ENCODE measurements at regions of chr1 and their contacts with region 1.

Region 1: DNA sequence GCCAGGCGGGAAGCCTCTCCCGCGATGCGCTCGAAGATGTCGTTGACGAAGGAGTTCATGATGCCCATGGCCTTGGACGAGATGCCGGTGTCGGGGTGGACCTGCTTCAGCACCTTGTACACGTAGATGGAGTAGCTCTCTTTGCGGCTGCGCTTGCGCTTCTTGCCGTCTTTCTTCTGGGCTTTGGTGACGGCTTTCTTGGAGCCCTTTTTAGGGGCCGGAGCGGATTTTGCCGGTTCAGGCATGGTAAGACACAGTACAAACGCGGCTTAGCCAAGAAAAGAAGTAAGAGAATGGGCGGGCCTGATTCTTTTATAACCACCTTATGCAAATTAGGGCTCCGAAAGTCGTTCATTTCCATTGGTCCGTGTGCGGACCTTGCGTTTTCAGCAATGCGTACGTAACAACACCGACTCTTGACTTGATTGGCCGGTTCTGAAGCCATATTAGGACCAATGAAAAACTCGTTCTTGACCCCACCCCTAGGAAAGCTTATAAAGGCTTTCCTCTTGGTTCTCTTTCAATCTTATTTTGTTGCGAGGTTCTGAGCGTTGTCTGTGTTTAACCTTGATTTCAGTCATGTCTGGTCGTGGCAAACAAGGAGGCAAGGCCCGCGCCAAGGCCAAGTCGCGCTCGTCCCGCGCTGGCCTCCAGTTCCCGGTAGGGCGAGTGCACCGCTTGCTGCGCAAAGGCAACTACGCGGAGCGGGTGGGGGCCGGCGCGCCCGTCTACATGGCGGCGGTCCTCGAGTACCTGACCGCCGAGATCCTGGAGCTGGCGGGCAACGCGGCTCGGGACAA is 12.8 kb upstream of the BOLA1 start:
- DNase-seq: peak; percentile 99
- ATAC-seq: peak; percentile 63
- H3K4me3 ChIP-seq: peak overlapping the region; percentile 50 to 63
- H3K27ac ChIP-seq: peak overlapping the region; percentile 100
- H3K4me1 ChIP-seq: peaks cover 22 to 45% of the 10 kb centered on the region in 2 experiments
- H3K27me3 ChIP-seq: no peaks in the 10 kb centered on the region
- CTCF ChIP-seq: no peak
- POLR2A ChIP-seq: peak; percentile 96
- RAD21 ChIP-seq: 0 out of 2 replicates have a peak, but pooled peaks have one; percentile 13

Region 2: GRCh38 chr1:149844101-149844500 is 42.5 kb before region 1 on chr1:
- CTCF ChIA-PET with region 1: no interaction called
- POLR2A ChIA-PET with region 1: interaction called, 37 read pairs
- RAD21 ChIA-PET with region 1: no interaction called
- intact Hi-C with region 1: no loop called
- DNase-seq: no peak
- ATAC-seq: no peak
- H3K4me3 ChIP-seq: peak overlapping the region; percentile 86 to 90
- H3K27ac ChIP-seq: peak overlapping the region; percentile 80; the same call in 1 of the 2 replicates
- H3K4me1 ChIP-seq: peaks cover 32 to 47% of the 10 kb centered on the region in 2 experiments
- H3K27me3 ChIP-seq: no peaks in the 10 kb centered on the region
- CTCF ChIP-seq: no peak
- POLR2A ChIP-seq: no peak
- RAD21 ChIP-seq: no peak

Region 3: DNA sequence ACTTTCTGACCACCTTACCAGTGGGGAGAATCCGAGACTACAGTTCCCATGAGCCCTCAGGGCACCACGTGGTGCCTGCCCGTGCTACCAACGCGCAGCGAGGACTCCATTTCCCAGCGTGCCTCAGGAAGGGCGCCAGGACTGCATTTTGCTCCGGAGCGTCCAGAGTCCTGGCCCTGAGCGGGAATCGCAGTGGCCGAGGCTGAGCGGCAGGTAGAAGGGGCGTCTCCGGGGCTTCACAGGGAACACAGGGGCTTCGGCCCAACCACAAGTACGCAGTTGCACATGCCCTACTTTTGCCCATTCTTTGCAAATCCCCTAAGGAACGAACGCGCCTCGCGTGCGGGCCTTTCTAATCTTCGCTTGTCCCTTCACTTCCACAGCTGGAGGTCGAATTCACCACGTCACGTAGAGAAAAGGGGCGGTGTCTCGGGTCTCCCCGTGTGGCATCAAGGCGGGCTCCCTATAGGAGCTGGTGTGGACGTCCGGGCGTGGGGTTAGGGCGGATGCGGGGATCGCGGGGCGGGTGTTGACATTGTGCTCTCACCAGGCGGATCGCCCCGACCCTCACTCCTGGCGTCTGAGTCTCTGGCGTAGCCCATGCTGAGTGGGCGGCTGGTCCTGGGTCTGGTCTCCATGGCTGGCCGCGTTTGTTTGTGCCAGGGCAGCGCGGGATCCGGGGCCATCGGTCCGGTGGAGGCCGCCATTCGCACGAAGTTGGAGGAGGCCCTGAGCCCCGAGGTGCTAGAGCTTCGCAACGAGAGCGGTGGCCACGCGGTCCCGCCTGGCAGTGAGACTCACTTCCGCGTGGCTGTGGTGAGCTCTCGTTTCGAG is 13.1 kb after region 1 on chr1 and contains the start of gene BOLA1:
- CTCF ChIA-PET with region 1: interaction called, 3 read pairs
- POLR2A ChIA-PET with region 1: interaction called, 16 read pairs
- RAD21 ChIA-PET with region 1: no interaction called
- intact Hi-C with region 1: no loop called
- DNase-seq: peak; percentile 86
- ATAC-seq: peak; percentile 97
- H3K4me3 ChIP-seq: peak within 1 kb of the TSS; percentile 59 to 73
- H3K27ac ChIP-seq: peak within 1 kb of the TSS; percentile 70
- H3K4me1 ChIP-seq: peaks cover 0 to 14% of the 10 kb centered on the region in 2 experiments; a peak in 2 of 4 replicates
- H3K27me3 ChIP-seq: no peaks in the 10 kb centered on the region
- CTCF ChIP-seq: no peak
- POLR2A ChIP-seq: peak; percentile 68
- RAD21 ChIP-seq: no peak
- total RNA-seq, gene BOLA1: 20.4 TPM

Region 4: DNA sequence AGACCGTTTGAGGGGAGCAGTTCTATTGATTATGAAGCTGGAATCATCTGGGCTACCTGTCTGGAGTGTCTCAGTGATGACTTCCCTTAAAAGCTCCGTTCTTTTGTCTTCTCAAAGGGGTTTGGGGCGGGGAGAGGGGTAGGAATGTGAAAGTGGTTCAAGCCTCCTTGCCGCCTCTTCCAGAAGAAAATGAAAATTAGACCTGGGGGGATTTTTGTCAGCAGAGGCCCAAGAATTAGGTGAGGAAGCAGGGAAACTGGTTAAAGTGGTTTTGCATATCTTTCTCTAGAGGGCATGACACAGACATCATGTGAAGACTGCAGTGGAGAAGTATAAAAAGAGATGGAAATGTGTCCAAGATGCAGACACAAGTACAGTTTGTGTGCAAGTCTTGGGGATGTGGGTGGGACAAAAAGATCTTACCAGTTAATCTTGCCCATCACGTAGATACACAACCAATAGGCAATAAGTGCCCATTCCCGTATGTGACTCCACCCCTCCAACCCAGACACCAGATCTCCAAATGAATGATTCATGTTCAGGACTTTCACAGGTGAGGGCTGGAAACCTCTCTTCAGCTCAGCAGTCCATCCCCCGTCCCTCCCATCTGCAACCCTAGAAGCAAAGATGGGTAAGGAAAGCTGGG is 50.6 kb after region 1 on chr1:
- CTCF ChIA-PET with region 1: interaction called, 4 read pairs
- POLR2A ChIA-PET with region 1: interaction called, 43 read pairs
- RAD21 ChIA-PET with region 1: interaction called in 1 of 2 experiments, 4 read pairs
- intact Hi-C with region 1: no loop called
- DNase-seq: peak; percentile 91
- ATAC-seq: peak; percentile 74
- H3K4me3 ChIP-seq: peak overlapping the region; percentile 64 to 66
- H3K27ac ChIP-seq: peak overlapping the region; percentile 89
- H3K4me1 ChIP-seq: peaks cover 39 to 63% of the 10 kb centered on the region in 2 experiments
- H3K27me3 ChIP-seq: no peaks in the 10 kb centered on the region
- CTCF ChIP-seq: no peak
- POLR2A ChIP-seq: peak; percentile 83
- RAD21 ChIP-seq: peak; percentile 18; the same call in 1 of the 2 replicates

Region 5: DNA sequence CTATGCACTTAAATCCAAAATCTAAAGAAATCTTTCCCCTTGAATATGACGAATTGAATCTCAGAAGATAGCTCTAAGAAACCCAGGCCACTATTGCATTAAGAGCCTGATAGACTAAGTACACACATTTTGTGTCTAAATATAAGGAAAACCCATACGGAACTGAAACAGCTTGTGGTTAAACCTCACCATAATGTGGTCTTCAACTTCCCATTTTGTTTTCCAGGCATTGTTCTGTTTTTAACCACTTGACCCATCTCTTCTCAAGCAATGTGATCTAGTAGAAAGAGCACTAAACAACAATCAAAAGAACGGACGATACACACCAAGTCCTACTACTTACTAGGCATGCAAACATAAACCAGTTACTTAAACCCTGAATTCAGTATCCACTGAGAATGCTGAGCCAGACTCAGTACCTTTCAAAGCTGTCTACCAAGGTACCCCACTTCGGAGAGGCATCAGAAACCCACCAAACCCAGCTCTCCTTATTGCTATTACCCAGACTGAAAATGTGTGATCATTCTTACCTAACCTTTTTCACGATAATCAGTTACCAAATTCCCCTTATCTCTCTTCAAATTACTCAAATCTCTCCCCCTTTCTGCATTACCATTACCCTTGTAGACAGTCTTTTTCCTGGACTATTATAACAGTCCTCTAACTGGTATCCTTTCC is 111.1 kb after region 1 on chr1:
- CTCF ChIA-PET with region 1: no interaction called
- POLR2A ChIA-PET with region 1: no interaction called
- RAD21 ChIA-PET with region 1: no interaction called
- intact Hi-C with region 1: no loop called
- DNase-seq: no peak
- ATAC-seq: no peak
- H3K4me3 ChIP-seq: no peak overlapping the region
- H3K27ac ChIP-seq: no peak overlapping the region
- H3K4me1 ChIP-seq: no peaks in the 10 kb centered on the region
- H3K27me3 ChIP-seq: no peaks in the 10 kb centered on the region
- CTCF ChIP-seq: no peak
- POLR2A ChIP-seq: no peak
- RAD21 ChIP-seq: no peak

Region 6: DNA sequence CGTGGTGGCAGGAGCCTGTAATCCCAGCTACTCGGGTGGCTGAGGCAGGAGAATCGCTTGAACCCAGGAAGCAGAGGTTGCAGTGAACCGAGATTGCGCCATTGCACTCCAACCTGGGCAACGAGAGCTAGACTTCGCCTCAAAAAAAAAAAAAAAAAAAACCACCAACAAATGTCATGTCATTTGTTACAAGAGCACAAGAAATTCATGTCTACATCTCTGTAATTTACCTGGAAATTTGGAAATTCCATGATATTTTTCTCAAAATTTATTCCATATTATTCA is 164.4 kb after region 1 on chr1:
- CTCF ChIA-PET with region 1: interaction called, 8 read pairs
- POLR2A ChIA-PET with region 1: interaction called, 14 read pairs
- RAD21 ChIA-PET with region 1: interaction called in 1 of 2 experiments, 3 read pairs
- intact Hi-C with region 1: loop called (anchors 1 kb)
- DNase-seq: no peak
- ATAC-seq: no peak
- H3K4me3 ChIP-seq: no peak overlapping the region
- H3K27ac ChIP-seq: no peak overlapping the region
- H3K4me1 ChIP-seq: peaks cover 0 to 16% of the 10 kb centered on the region in 2 experiments; a peak in 2 of 4 replicates
- H3K27me3 ChIP-seq: no peaks in the 10 kb centered on the region
- CTCF ChIP-seq: no peak
- POLR2A ChIP-seq: no peak
- RAD21 ChIP-seq: no peak

Region 7: DNA sequence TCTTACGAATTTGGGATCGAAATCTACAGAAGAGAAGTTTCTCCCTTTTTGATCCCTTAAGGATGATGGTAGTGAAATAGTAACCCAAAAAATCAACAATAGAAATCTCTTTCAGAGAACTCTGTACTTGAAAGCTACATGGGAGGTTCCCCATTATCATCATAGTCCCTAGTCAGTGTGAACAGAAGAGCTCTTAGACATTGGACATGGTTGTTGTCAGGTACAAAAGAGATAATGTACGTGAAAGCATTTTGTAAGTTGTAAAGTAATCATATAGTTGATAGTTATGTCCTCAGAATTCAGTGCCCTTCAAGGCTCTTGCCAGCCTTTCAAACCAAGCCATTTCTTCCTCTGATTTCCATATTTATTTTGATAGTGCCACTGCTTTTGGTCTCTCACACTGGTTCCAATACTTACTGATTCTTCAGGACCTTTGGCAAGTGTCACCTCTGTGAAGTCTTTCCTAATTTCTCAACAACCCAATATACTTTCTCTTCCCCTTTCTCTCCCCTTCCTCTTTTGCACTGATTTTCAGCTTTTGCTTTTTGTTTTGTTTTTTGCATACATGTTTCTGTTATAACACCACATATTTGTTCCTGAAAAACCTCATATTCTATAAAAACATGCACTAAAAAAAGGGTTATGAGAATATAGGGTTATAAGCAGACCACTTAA is 203.4 kb after region 1 on chr1:
- CTCF ChIA-PET with region 1: no interaction called
- POLR2A ChIA-PET with region 1: no interaction called
- RAD21 ChIA-PET with region 1: no interaction called
- intact Hi-C with region 1: no loop called
- DNase-seq: no peak
- ATAC-seq: no peak
- H3K4me3 ChIP-seq: no peak overlapping the region
- H3K27ac ChIP-seq: no peak overlapping the region
- H3K4me1 ChIP-seq: no peaks in the 10 kb centered on the region
- H3K27me3 ChIP-seq: no peaks in the 10 kb centered on the region
- CTCF ChIP-seq: no peak
- POLR2A ChIP-seq: no peak
- RAD21 ChIP-seq: no peak

Region 8: GRCh38 chr1:150168960-150169601 is 282.5 kb after region 1 on chr1:
- CTCF ChIA-PET with region 1: interaction called, 17 read pairs
- POLR2A ChIA-PET with region 1: interaction called, 13 read pairs
- RAD21 ChIA-PET with region 1: no interaction called
- intact Hi-C with region 1: no loop called
- DNase-seq: peak; percentile 59
- ATAC-seq: peak; percentile 87
- H3K4me3 ChIP-seq: no peak overlapping the region
- H3K27ac ChIP-seq: no peak overlapping the region
- H3K4me1 ChIP-seq: no peaks in the 10 kb centered on the region
- H3K27me3 ChIP-seq: no peaks in the 10 kb centered on the region
- CTCF ChIP-seq: peak; percentile 85 to 92 (median 86)
- POLR2A ChIP-seq: no peak
- RAD21 ChIP-seq: peak; percentile 96